Activated CD4-positive, alpha-beta memory T cell treated with anti-CD3 and anti-CD28 coated beads, Interleukin-2, amount 10 ng/mL, durations not matched to agents 7 days and 5 days (primary cell): ENCODE measurements at regions of chr7 and their contacts with region 1.

Region 1: DNA sequence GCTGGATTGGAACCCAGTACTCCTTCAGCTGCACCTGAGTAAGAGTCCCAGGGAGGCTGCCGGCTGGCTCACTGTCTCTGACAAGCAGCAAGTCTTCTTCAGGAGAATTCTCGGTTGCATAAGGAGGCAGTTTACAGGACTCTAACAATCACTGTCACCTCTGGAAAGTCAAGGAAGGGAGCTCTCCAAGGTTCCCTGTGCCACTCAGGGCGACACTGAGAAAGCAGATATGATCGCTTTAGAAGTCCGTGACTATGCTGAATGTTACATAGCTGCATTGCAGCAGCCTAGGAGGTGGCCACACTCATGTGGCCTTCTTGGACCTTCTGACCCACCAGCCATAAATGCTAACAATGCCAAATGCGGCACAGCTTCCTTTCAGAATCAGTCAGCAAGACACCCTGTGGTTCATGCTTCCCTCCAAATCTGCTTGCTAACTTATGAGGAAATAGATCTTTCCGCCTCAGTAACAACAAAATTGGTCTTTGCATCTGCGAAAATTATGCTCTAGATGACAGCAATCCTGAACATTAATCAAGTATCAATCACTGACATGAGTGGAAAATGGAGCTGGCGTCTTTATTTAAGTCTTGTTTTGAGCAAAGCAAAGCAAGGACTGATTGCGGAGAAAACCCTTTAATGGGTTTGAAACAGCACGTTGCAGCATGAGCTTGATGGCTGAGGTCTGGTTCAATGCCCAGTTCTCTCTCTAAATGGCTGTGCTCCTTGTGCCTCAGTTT is 132.9 kb downstream of the ATXN7L1 start:
- DNase-seq: peak; percentile 33
- H3K4me3 Mint-ChIP-seq: no peak overlapping the region
- H3K27ac Mint-ChIP-seq: no peak overlapping the region
- H3K4me1 Mint-ChIP-seq: peaks cover 34% of the 10 kb centered on the region
- H3K27me3 Mint-ChIP-seq: no peaks in the 10 kb centered on the region

Region 2: GRCh38 chr7:105473163-105473562 is 270.4 kb before region 1 on chr7:
- CTCF ChIA-PET with region 1: no interaction called
- POLR2A ChIA-PET with region 1: no interaction called
- DNase-seq: no peak
- H3K4me3 Mint-ChIP-seq: no peak overlapping the region
- H3K27ac Mint-ChIP-seq: no peak overlapping the region
- H3K4me1 Mint-ChIP-seq: no peaks in the 10 kb centered on the region
- H3K27me3 Mint-ChIP-seq: no peaks in the 10 kb centered on the region

Region 3: GRCh38 chr7:105678811-105679495 is 64.6 kb before region 1 on chr7:
- CTCF ChIA-PET with region 1: no interaction called
- POLR2A ChIA-PET with region 1: interaction called, 15 read pairs
- DNase-seq: peak; percentile 35
- H3K4me3 Mint-ChIP-seq: peak overlapping the region; percentile 81
- H3K27ac Mint-ChIP-seq: peak overlapping the region; percentile 92
- H3K4me1 Mint-ChIP-seq: peaks cover 57% of the 10 kb centered on the region
- H3K27me3 Mint-ChIP-seq: no peaks in the 10 kb centered on the region